H1 (cell line): ENCODE measurements at regions of chr13 and their contacts with region 1.

Region 1: DNA sequence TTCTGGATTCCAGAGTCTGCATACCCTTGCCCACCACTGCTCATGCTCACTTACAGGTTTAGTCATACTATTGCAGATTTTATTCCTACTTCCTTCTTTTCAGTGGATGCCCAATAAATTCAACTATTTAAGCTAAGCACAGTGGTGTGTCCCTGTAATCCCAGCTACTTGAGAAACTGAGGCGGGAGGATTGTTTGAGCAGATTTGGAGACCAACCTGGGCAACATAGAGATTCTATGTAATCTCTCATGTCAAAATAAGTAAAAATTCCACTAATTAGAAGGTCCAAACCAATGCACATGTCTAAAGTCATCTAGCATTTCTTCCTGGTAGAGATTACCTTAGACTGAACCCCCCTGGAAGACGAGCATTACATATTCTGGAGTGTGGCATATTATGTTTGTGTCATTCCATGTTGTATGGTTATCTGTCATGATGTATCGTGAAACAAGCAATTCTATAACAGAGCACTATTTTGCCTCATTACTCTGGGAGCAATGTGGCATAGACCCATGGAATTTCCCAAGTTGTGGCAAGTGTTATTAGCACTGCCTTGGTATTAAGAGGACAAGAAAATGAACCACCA is 8.3 kb downstream of the HMGB1 start:
- DNase-seq: no peak
- H3K4me3 ChIP-seq: no peak overlapping the region
- H3K27ac ChIP-seq: no peak overlapping the region
- H3K4me1 ChIP-seq: no peaks in the 10 kb centered on the region
- H3K27me3 ChIP-seq: no peaks in the 10 kb centered on the region
- CTCF ChIP-seq: no peak
- EP300 ChIP-seq: no peak
- POLR2A ChIP-seq: no peak; a peak in 1 of 3 replicates
- RAD21 ChIP-seq: no peak

Region 2: GRCh38 chr13:30159446-30159839 is 298.0 kb before region 1 on chr13:
- CTCF ChIA-PET with region 1: no interaction called
- POLR2A ChIA-PET with region 1: no interaction called
- DNase-seq: no peak
- H3K4me3 ChIP-seq: no peak overlapping the region
- H3K27ac ChIP-seq: no peak overlapping the region
- H3K4me1 ChIP-seq: peaks cover 0 to 5% (median 0%) of the 10 kb centered on the region in 4 experiments; a peak in 1 of 7 replicates
- H3K27me3 ChIP-seq: no peaks in the 10 kb centered on the region
- CTCF ChIP-seq: no peak
- EP300 ChIP-seq: no peak
- POLR2A ChIP-seq: no peak
- RAD21 ChIP-seq: no peak

Region 3: DNA sequence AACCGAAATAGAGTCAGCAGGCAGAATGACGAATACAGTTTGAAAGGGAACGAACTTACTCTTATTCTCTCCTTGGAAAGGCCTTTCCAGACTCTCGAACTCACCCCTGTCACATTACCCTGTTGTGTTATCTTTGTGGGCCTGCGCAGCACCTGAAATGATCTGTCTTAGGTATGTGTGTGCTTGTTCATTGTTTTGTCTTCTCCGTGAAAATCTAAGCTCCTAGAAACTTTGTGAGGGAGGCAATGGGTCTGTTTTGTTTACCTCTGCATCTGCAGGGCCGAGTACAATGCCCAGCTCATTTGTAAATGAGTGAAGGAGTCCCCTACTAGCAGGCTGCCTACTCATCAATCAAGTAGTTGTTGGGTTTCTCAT is 11.3 kb before region 1 on chr13:
- CTCF ChIA-PET with region 1: interaction called, 7 read pairs
- POLR2A ChIA-PET with region 1: interaction called, 12 read pairs
- DNase-seq: no peak
- H3K4me3 ChIP-seq: peak overlapping the region; percentile 30 to 59 (median 40); a peak in 7 of 8 replicates
- H3K27ac ChIP-seq: peak overlapping the region; percentile 72
- H3K4me1 ChIP-seq: peaks cover 0 to 10% (median 7%) of the 10 kb centered on the region in 4 experiments; a peak in 6 of 7 replicates
- H3K27me3 ChIP-seq: no peaks in the 10 kb centered on the region; a peak in 1 of 7 replicates
- CTCF ChIP-seq: no peak
- EP300 ChIP-seq: no peak
- POLR2A ChIP-seq: peak in 1 of 2 experiments; percentile 35; a peak in 1 of 3 replicates
- RAD21 ChIP-seq: no peak